Caco-2 (cell line): ENCODE measurements at regions of chr5 and their contacts with region 1.

Region 1: DNA sequence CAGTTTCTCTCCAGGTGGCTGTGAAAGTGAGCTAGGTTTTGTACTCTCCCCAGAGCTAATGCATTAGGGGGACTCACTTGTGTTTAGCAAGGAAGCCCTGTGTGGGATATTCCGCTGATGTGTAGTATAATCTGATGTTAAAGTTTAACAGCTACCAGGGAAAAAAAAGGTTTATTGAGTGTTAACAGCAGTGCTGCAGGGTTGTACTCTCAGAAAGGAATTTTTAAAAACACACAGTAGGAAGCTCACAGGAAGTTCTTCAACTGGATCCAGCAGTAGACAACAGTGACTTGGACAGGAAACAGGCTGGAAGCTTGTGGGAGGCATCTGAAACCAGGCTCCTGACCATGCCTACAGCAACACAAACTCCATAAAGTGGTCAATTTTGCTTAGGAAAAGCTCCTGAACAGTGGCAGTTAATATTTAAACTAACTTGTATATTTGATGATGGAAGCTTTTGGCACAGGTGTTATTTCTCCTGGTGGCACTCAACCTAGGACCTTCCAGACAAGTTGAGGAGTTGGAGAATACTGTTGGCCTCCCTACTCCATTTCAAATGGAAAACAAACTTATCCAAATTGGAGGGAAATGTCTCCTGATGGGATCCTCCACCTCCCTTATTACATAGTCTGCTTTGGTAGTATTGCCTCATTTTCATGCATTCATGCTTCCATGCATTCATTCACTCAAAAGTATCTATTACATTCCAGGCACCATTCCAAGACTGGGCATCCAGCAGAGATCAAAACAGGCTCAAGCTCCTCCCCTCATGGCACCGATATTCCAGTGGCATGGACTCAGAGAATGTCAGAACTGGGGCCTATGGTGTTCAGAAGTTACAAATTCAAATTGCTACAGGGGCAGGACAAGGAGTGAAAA is 54.7 kb downstream of the FOXD1 start:
- DNase-seq: peak in 1 of 2 experiments; percentile 16
- H3K4me3 ChIP-seq: no peak overlapping the region
- H3K4me3 Mint-ChIP-seq: no peak overlapping the region
- H3K27ac Mint-ChIP-seq: peak overlapping the region; percentile 43
- H3K4me1 ChIP-seq: peaks cover 40% of the 10 kb centered on the region
- H3K4me1 Mint-ChIP-seq: peaks cover 34% of the 10 kb centered on the region
- H3K27me3 ChIP-seq: no peaks in the 10 kb centered on the region
- H3K27me3 Mint-ChIP-seq: no peaks in the 10 kb centered on the region
- CTCF ChIP-seq: no peak

Region 2: GRCh38 chr5:73419465-73420390 is 25.9 kb after region 1 on chr5:
- CTCF ChIA-PET with region 1: no interaction called
- POLR2A ChIA-PET with region 1: no interaction called
- intact Hi-C with region 1: loop called (anchors 1 kb)
- DNase-seq: peak in 1 of 2 experiments; percentile 23
- H3K4me3 ChIP-seq: peak overlapping the region; percentile 34
- H3K4me3 Mint-ChIP-seq: peak overlapping the region; percentile 68
- H3K27ac Mint-ChIP-seq: no peak overlapping the region
- H3K4me1 ChIP-seq: no peaks in the 10 kb centered on the region
- H3K4me1 Mint-ChIP-seq: no peaks in the 10 kb centered on the region
- H3K27me3 ChIP-seq: no peaks in the 10 kb centered on the region
- H3K27me3 Mint-ChIP-seq: peaks cover 7% of the 10 kb centered on the region
- CTCF ChIP-seq: no peak